ENCODE measurements at regions of chr19 and their contacts with region 1.

Region 1: DNA sequence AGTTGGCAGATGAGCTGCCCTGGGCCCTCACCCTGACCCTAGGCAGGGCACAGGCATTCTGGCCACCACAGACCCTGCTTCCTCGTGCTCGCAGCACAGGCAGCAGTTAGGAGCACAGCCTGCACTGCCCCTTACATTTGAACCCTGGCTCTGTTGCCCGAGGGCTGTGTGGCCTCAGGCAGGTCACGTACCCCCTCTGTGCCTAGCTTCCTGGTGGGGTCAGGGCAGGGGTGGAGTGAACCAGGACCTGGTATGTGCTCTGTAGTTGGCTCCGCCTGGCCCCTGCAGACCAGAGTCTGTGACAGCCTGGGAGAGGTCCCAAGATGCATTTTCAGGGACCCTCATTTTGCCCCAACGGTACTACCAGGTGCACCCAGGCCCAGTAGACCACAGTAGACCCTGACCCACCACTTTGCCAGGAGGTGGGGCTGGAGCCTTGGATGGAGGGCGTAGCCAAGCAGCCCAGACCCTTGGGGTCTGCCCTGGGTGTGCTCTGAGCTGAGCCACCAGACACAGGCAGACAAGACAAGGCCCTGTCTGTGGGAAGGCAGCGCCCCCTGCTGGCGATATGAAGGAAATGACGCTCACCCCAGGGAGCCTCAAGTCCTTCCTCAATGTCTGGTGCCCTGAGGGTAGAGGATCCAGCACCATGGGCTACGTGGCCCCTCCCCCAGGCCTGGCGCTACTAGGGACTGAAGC is 9.1 kb downstream of the LYL1 start:
- DNase-seq: peak; percentile 89
- H3K4me3 Mint-ChIP-seq: no peak overlapping the region
- H3K27ac Mint-ChIP-seq: no peak overlapping the region
- H3K4me1 Mint-ChIP-seq: peaks cover 24% of the 10 kb centered on the region
- H3K27me3 Mint-ChIP-seq: peaks cover 20% of the 10 kb centered on the region

Region 2: GRCh38 chr19:12974301-12975220 is 119.0 kb before region 1 on chr19:
- CTCF ChIA-PET with region 1: interaction called, 182 read pairs
- POLR2A ChIA-PET with region 1: interaction called, 8 read pairs
- intact Hi-C with region 1: loop called (anchors 1 kb)
- DNase-seq: no peak
- H3K4me3 Mint-ChIP-seq: no peak overlapping the region
- H3K27ac Mint-ChIP-seq: no peak overlapping the region
- H3K4me1 Mint-ChIP-seq: peaks cover 9% of the 10 kb centered on the region
- H3K27me3 Mint-ChIP-seq: peaks cover 8% of the 10 kb centered on the region

Region 3: DNA sequence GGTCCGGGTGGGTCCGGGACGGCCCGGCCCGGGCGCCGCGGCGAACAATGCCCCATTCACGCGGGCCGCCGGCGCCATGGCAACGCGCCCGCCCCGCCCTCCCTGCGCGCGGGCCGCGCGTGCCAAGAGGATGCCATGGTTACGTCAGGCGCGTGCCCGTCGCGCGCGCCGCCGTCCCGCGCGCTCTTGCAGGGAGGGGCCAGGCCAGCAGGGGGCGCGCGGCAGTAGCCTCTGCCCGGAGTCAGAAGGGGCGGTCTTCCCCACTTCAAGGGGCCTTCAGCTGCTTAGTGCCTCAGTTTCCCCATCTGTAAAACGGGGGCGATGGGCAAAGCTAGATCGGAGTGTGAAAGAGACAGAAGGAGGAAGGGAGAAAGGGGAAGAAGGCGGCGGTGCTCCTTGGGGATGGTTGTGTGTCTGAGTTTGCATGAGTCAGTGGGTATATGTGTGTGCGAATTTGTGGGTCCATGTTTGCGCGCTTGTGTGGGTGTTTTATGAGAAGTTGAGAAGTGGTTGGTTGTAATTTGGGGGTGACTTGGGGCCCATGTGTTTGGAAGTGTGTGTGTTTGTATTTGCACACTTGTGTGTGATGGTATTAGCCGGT is 109.9 kb before region 1 on chr19:
- CTCF ChIA-PET with region 1: interaction called, 182 read pairs
- POLR2A ChIA-PET with region 1: interaction called, 8 read pairs
- intact Hi-C with region 1: loop called (anchors 1 kb)
- DNase-seq: peak; percentile 88
- H3K4me3 Mint-ChIP-seq: no peak overlapping the region
- H3K27ac Mint-ChIP-seq: no peak overlapping the region
- H3K4me1 Mint-ChIP-seq: no peaks in the 10 kb centered on the region
- H3K27me3 Mint-ChIP-seq: no peaks in the 10 kb centered on the region

Region 4: DNA sequence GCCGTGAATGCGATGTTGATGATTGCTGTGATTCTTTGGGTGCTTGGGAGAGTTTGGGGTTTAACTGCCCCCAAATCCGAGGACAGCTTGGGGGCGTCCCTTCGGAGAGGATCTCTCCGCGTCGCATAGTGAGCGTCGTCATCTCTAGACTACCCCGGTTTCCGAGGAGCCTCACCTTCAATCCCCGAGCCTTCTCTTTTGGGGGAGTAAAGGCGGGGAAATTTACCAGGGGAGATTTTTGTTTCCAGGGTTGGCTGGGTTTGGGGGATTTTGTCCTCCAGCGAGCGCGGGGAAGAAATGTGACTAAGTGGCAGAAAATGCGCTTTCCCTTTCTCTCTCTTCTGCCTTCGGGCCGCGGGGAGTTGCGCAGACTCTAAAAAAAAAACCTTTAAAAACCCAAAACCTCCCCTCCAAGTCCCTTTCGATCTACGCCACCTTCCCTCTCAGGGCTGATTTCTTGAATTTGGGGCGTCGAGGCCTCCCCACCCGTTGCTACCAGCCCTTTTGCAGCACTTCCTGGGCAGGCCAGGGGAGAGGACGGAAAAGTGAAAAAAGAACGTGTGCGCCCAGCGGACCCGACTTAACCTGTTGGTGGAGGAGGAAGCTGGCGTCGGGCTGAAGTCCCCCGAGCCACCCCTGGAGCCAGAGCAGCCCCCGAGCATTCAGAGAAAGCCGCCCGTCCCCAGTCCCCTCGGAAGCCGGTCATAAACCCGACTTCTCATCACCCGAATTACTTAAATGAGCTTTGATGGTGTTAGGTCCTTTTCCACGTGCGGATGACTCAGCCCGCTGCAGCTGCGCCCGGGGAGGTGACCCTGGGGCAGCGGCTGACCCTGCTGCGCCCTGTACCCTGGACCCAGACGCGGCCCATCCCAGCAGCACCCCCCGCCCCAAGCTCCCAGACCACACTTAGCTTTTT is 80.6 kb before region 1 on chr19:
- CTCF ChIA-PET with region 1: interaction called, 15 read pairs
- POLR2A ChIA-PET with region 1: no interaction called
- intact Hi-C with region 1: loop called (anchors 2 kb)
- DNase-seq: peak; percentile 59
- H3K4me3 Mint-ChIP-seq: peak overlapping the region; percentile 79
- H3K27ac Mint-ChIP-seq: peak overlapping the region; percentile 66
- H3K4me1 Mint-ChIP-seq: peaks cover 21% of the 10 kb centered on the region
- H3K27me3 Mint-ChIP-seq: peaks cover 58% of the 10 kb centered on the region

Region 5: DNA sequence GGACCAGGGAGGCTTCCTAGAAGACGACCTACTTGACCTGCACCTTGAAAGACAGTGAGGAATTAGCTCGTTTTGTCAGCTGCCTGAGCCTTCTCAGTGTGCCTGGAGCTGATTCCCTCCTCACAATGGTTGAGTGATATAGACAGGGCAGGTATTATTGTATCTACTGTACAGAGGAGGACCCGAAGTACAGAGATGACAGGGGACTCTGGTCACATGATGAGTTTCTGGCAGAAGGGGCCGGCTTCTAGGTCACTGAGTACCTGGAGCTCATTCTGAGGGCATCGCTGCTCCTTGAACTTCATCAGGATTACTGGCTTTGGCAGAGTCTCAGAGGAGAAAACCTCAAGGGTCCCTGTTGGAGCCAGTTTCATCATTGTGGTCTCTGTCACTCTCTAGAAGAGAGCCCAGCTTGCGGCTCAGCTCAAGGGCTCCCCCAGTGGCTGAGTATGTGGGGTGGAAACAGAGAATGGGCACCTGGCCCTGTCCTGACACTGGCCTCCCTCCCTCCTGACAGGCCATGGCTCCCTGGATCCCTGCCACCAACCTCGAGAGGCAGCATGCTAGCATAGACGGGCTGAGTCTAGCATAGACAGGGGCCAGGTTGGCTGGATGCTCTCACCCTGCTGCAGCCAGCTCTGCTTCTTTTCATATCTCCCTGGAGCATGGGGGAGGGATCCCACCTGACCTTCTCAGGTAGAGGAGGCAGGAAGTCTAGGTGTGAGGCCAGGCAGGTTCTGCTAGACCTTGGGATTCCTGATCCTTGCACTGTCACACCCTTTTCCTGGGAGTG is 59.5 kb before region 1 on chr19:
- CTCF ChIA-PET with region 1: interaction called, 8 read pairs
- POLR2A ChIA-PET with region 1: no interaction called
- intact Hi-C with region 1: loop called (anchors 5 kb)
- DNase-seq: peak; percentile 60
- H3K4me3 Mint-ChIP-seq: no peak overlapping the region
- H3K27ac Mint-ChIP-seq: no peak overlapping the region
- H3K4me1 Mint-ChIP-seq: peaks cover 5% of the 10 kb centered on the region
- H3K27me3 Mint-ChIP-seq: no peaks in the 10 kb centered on the region

Region 6: GRCh38 chr19:13104360-13104847 is 10.8 kb after region 1 on chr19:
- CTCF ChIA-PET with region 1: interaction called, 12 read pairs
- POLR2A ChIA-PET with region 1: no interaction called
- intact Hi-C with region 1: no loop called
- DNase-seq: peak; percentile 81
- H3K4me3 Mint-ChIP-seq: peak overlapping the region; percentile 92
- H3K27ac Mint-ChIP-seq: peak overlapping the region; percentile 94
- H3K4me1 Mint-ChIP-seq: peaks cover 32% of the 10 kb centered on the region
- H3K27me3 Mint-ChIP-seq: no peaks in the 10 kb centered on the region

Region 7: DNA sequence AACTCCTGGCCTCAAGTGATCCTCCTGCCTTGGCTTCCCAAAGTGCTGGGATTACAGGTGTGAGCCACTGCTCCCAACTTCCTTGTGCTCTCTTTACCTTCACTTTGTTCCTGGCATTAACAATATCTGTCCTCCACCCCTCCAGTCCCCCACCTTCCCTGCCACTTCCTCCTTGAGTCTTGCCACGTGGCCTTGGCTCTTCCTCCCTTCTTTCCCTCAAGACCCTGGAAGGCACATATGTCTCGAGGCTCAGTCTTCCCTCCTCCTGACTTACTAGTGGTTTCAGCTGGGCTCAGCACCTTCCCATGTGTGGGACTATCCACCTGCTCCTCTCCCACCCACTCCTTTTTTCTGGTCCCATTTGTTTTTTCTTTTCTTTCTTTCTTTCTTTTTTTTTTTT is 127.3 kb after region 1 on chr19:
- CTCF ChIA-PET with region 1: no interaction called
- POLR2A ChIA-PET with region 1: no interaction called
- intact Hi-C with region 1: no loop called
- DNase-seq: no peak
- H3K4me3 Mint-ChIP-seq: no peak overlapping the region
- H3K27ac Mint-ChIP-seq: no peak overlapping the region
- H3K4me1 Mint-ChIP-seq: peaks cover 14% of the 10 kb centered on the region
- H3K27me3 Mint-ChIP-seq: peaks cover 7% of the 10 kb centered on the region

Measured in activated CD4-positive, alpha-beta memory T cell treated with anti-CD3 and anti-CD28 coated beads for 36 hours (primary cell).